Cardiac septum (tissue), 1 donor: ENCODE measurements at regions of chr13 and their contacts with region 1.

Region 1: GRCh38 chr13:51222037-51222685 is at the start of gene FAM124A:
- DNase-seq: no peak
- total RNA-seq, gene FAM124A: 4.6 TPM

Region 2: GRCh38 chr13:51249770-51250741 is 27.9 kb after region 1 on chr13:
- intact Hi-C with region 1: loop called (anchors 2 kb)
- DNase-seq: no peak

Region 3: DNA sequence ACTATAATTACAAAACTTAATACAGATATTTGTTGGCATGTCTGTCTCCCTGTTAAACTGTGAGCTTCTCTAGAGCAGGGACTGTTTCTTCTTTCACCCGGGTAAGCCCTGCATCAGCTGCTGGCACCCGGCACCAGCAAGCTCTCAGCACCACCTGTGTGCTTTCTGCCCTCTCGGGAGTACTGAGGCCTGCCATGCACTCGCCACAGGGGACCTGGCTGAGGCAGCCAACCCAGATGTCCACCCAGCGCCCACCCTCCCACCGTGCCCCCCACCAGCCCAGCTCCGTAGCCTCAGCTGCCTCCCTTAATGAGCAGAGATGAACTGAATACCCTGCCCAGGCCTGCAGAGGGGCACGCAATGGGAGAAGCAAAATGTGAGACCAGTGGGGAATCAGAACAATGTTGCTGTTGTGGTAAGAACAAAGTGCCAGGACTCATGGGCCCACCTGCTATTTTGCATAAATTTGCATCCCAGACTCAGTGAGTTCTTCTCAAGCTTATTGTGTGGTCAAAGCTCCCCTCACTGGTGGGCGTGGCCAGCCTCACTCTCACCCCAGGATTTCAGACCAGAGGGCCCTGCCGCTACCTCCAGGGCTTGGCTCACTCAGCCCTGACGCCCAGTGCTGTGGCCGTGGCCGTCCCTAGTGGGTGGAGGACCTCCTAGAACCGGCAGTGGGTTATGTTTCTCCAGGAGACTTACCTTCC is 102.7 kb after region 1 on chr13:
- intact Hi-C with region 1: no loop called
- DNase-seq: no peak

Region 4: GRCh38 chr13:51348069-51348967 is 126.2 kb after region 1 on chr13:
- intact Hi-C with region 1: no loop called
- DNase-seq: no peak

Region 5: GRCh38 chr13:51647067-51647466 is 424.9 kb after region 1 on chr13:
- intact Hi-C with region 1: no loop called
- DNase-seq: no peak